ENCODE measurements at regions of chr6 and their contacts with region 1.

Region 1: DNA sequence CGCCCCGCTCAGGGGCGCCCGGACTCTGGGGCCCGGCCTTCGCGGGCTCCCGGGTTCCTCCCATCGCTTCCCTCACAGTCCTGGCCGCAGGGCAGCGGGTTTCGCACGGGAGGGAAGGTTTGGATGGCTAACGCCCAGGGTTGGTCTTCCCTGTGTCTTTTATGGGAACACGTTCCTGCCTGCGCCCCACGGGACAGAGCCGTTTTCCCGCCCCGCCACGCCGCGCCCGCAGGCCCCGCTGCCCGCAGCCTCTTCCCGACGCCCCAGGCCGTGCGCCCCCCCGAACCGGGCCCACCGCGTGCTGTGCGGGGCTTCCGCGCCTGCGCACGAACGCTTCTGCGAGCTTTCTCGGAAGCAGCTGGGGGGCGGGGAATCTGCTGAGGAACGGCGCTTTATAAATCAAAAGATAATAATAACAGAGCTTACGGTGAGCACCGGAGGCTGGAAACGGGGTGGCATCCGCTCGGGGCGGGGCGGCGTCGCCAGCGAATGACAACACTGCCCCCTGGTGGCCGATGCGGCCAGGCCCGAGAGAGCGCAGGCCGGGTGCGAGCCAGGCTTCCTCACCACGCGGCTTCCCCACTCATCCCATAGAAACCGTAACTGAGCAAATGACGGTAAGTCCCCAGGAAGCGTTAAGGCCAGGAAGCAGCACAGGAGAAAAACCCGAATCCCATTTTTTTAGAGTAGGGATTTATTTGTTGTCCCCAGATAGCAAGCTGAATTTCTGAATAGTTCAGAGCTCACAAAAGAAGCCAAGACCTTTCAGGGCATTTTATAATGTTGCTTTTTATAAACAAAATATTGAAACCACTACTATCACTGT is 116.4 kb downstream of the MYLK4 start:
- DNase-seq: peak; percentile 55 to 87
- ATAC-seq: peak; percentile 88 to 93
- H3K4me3 ChIP-seq: peak overlapping the region; percentile 36
- H3K27ac ChIP-seq: peak overlapping the region; percentile 81 to 95
- H3K4me1 ChIP-seq: peaks cover 51% of the 10 kb centered on the region
- CTCF ChIP-seq: peak; percentile 81
- EP300 ChIP-seq: no peak
- POLR2A ChIP-seq: no peak
- RAD21 ChIP-seq: peak; percentile 85 to 97

Region 2: DNA sequence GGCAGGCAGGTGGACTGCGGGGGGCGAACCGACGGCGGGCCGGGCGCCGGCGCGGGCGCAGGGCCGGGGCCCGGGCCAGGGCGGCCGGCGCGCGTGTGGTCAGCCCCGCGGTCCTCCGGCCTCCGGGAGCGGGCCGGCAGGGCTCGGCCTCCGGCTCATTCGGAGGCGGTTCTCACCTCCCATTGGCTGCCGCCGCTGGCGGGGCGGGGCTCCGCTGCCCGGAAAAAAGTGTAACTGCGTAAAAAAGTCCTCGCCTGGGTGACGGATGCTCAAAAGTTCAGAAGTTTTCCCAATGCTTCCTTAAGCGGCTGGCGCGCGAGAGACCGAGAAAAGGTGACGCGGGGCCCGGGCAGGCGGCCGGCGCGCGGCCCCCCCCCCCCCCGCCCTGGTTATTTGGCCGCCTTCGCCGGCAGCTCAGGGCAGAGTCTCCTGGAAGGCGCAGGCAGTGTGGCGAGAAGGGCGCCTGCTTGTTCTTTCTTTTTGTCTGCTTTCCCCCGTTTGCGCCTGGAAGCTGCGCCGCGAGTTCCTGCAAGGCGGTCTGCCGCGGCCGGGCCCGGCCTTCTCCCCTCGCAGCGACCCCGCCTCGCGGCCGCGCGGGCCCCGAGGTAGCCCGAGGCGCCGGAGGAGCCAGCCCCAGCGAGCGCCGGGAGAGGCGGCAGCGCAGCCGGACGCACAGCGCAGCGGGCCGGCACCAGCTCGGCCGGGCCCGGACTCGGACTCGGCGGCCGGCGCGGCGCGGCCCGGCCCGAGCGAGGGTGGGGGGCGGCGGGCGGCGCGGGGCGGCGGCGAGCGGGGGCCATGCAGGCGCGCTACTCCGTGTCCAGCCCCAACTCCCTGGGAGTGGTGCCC is 1024.5 kb before region 1 on chr6 and contains the start of gene FOXC1:
- CTCF ChIA-PET with region 1: interaction called, 13 read pairs
- POLR2A ChIA-PET with region 1: interaction called, 5 read pairs
- DNase-seq: peak; percentile 86 to 90
- ATAC-seq: peak; percentile 69 to 89
- H3K4me3 ChIP-seq: peak within 1 kb of the TSS; percentile 83
- H3K27ac ChIP-seq: peak within 1 kb of the TSS; percentile 88 to 99
- H3K4me1 ChIP-seq: peaks cover 13% of the 10 kb centered on the region; the same call in 2 of the 3 replicates
- CTCF ChIP-seq: no peak
- EP300 ChIP-seq: no peak
- POLR2A ChIP-seq: peak; percentile 55
- RAD21 ChIP-seq: no peak
- polyA plus RNA-seq, gene FOXC1: 3.7 and 4.7 TPM in 2 replicates

Region 3: GRCh38 chr6:2353412-2354137 is 280.8 kb before region 1 on chr6:
- CTCF ChIA-PET with region 1: interaction called, 15 read pairs
- POLR2A ChIA-PET with region 1: no interaction called
- DNase-seq: peak; percentile 33 to 63
- ATAC-seq: peak; percentile 59 to 68; a peak in 3 of 6 replicates
- H3K4me3 ChIP-seq: no peak overlapping the region
- H3K27ac ChIP-seq: no peak overlapping the region
- H3K4me1 ChIP-seq: no peaks in the 10 kb centered on the region
- CTCF ChIP-seq: peak; percentile 73
- EP300 ChIP-seq: no peak
- POLR2A ChIP-seq: no peak
- RAD21 ChIP-seq: peak; percentile 80 to 83

Region 4: DNA sequence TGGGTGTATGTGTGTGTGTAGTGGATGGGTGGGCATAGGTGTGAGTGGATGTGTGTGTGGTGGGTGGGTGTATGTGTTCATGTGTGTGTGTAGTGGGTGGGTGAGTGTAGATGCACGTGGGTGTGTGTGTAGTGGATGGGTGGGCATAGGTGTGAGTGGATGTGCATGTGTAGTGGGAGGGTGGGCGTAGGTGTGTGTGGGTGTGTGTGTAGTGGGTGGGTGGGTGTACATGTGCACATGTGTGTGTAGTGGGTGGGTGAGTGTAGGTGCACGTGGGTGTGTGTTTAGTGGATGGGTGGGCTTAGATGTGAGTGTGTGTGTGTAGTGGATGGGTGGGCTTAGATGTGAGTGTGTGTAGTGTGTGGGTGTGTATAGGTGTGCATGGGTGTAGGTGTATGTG is 12.0 kb after region 1 on chr6:
- CTCF ChIA-PET with region 1: interaction called, 23 read pairs
- POLR2A ChIA-PET with region 1: no interaction called
- DNase-seq: no peak
- ATAC-seq: no peak
- H3K4me3 ChIP-seq: no peak overlapping the region
- H3K27ac ChIP-seq: no peak overlapping the region
- H3K4me1 ChIP-seq: no peaks in the 10 kb centered on the region
- CTCF ChIP-seq: no peak
- EP300 ChIP-seq: no peak
- POLR2A ChIP-seq: no peak
- RAD21 ChIP-seq: no peak

Region 5: DNA sequence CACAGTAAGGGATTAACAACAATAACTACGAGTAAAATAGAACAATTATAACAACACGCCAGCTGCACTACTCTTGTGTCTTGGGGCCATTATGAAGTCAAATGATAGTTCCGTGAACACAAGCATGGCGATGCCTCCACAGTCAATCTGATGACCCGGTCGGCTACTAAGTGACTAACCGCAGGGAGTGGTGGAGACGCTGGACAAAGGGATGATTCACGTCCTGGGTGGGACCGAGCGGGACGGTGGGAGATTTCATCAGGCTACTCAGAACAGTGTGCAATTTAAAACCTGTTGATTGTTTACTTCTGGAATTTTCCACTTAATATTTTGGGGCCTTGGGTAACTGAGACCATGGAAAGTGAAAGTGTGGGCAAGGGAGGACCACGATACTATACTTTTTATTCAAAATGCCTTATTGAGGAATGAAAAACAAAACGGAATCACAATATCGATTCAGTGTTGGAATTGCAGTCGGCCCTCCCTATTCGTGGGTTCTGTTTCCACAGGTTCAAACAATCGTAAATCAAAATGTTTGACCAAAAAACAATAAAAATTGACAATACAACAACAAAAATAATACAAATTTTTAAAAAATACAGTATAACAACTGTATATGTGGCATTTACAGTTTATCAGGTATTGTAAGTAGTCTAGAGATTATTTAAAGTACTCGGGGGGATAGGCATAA is 49.9 kb after region 1 on chr6:
- CTCF ChIA-PET with region 1: interaction called, 12 read pairs
- POLR2A ChIA-PET with region 1: no interaction called
- DNase-seq: peak; percentile 46 to 67
- ATAC-seq: peak; percentile 50 to 80; a peak in 4 of 6 replicates
- H3K4me3 ChIP-seq: no peak overlapping the region
- H3K27ac ChIP-seq: peak overlapping the region; percentile 19 to 67; a peak in 5 of 6 replicates
- H3K4me1 ChIP-seq: peaks cover 7% of the 10 kb centered on the region; the same call in 1 of the 3 replicates
- CTCF ChIP-seq: no peak
- EP300 ChIP-seq: no peak
- POLR2A ChIP-seq: no peak
- RAD21 ChIP-seq: no peak

Region 6: GRCh38 chr6:2733324-2733723 is 99.0 kb after region 1 on chr6:
- CTCF ChIA-PET with region 1: no interaction called
- POLR2A ChIA-PET with region 1: no interaction called
- DNase-seq: no peak
- ATAC-seq: no peak
- H3K4me3 ChIP-seq: no peak overlapping the region
- H3K27ac ChIP-seq: no peak overlapping the region
- H3K4me1 ChIP-seq: 0 out of 3 replicates have a peak, but pooled peaks cover 4% of the 10 kb centered on the region
- CTCF ChIP-seq: no peak
- EP300 ChIP-seq: no peak
- POLR2A ChIP-seq: no peak
- RAD21 ChIP-seq: no peak